H1 (cell line): ENCODE measurements at regions of chr3 and their contacts with region 1.

Region 1: DNA sequence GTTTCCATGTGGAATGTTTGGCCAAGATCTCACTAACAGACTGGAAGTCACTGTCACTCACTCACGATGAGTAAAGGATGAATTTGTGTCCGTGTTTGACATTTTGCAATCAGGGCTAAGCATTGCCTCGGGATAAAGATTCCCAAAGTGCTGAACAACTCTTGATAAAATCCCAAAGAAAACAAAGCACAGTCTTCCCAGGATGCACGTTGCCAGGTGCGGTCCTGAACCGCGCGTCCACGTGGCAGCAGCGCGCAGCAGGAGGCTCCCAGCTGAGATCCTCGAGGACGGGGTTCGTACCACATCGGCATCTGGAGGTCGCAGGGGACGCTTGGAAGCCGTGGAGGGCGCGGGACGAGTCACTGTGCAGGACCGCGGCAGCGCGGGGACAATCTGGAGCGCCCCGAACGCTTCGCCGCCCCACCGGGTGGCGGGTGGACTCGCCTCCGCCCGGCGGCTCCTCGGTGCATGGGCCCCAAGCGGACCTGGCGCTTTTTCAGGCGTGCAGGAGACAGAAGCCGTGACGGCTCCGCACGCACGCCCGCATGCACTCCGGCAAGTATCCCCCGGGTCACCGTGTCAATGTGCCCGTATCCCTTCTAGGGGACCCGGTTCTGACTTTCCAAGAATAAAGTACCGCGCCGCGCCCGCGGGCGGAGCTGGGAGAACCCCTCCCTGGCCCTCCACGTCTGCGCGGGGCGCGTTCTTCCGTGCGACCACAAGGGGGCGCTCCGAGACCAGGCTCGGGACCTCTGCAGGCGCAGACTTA is 17.7 kb downstream of the CPN2 start:
- DNase-seq: peak; percentile 50 to 98
- H3K4me3 ChIP-seq: peak overlapping the region; percentile 16 to 62 (median 32)
- H3K27ac ChIP-seq: no peak overlapping the region
- H3K4me1 ChIP-seq: peaks cover 0 to 3% (median under 1%) of the 10 kb centered on the region in 4 experiments; a peak in 1 of 7 replicates
- H3K27me3 ChIP-seq: peaks cover 0 to 24% (median 15%) of the 10 kb centered on the region in 4 experiments; a peak in 5 of 7 replicates
- CTCF ChIP-seq: peak in 2 of 3 experiments; percentile 90 to 97; a peak in 3 of 4 replicates
- EP300 ChIP-seq: peak in 1 of 2 experiments; percentile 32; a peak in 1 of 3 replicates
- POLR2A ChIP-seq: no peak
- RAD21 ChIP-seq: peak; percentile 98

Region 2: GRCh38 chr3:194344012-194344411 is 10.6 kb after region 1 on chr3:
- CTCF ChIA-PET with region 1: interaction called, 91 read pairs
- POLR2A ChIA-PET with region 1: interaction called, 3 read pairs
- DNase-seq: peak; percentile 58 to 96
- H3K4me3 ChIP-seq: no peak overlapping the region
- H3K27ac ChIP-seq: no peak overlapping the region
- H3K4me1 ChIP-seq: peaks cover 4 to 22% (median 17%) of the 10 kb centered on the region in 4 experiments
- H3K27me3 ChIP-seq: peaks cover 0 to 20% (median 11%) of the 10 kb centered on the region in 4 experiments; a peak in 6 of 7 replicates
- CTCF ChIP-seq: peak; percentile 86 to 90 (median 90)
- EP300 ChIP-seq: no peak
- POLR2A ChIP-seq: no peak
- RAD21 ChIP-seq: peak; percentile 70 to 81

Region 3: GRCh38 chr3:194351952-194352536 is 18.6 kb after region 1 on chr3:
- CTCF ChIA-PET with region 1: interaction called, 344 read pairs
- POLR2A ChIA-PET with region 1: interaction called, 3 read pairs
- DNase-seq: no peak
- H3K4me3 ChIP-seq: no peak overlapping the region
- H3K27ac ChIP-seq: no peak overlapping the region
- H3K4me1 ChIP-seq: peaks cover 0 to 3% (median 0%) of the 10 kb centered on the region in 4 experiments; a peak in 1 of 7 replicates
- H3K27me3 ChIP-seq: no peaks in the 10 kb centered on the region; a peak in 1 of 7 replicates
- CTCF ChIP-seq: no peak
- EP300 ChIP-seq: no peak
- POLR2A ChIP-seq: no peak
- RAD21 ChIP-seq: no peak

Region 4: GRCh38 chr3:194364652-194365434 is 31.4 kb after region 1 on chr3:
- CTCF ChIA-PET with region 1: interaction called, 344 read pairs
- POLR2A ChIA-PET with region 1: no interaction called
- DNase-seq: no peak
- H3K4me3 ChIP-seq: no peak overlapping the region
- H3K27ac ChIP-seq: no peak overlapping the region
- H3K4me1 ChIP-seq: peaks cover 2 to 15% (median 9%) of the 10 kb centered on the region in 4 experiments
- H3K27me3 ChIP-seq: peaks cover 0 to 8% (median 3%) of the 10 kb centered on the region in 4 experiments; a peak in 4 of 7 replicates
- CTCF ChIP-seq: no peak
- EP300 ChIP-seq: no peak
- POLR2A ChIP-seq: no peak
- RAD21 ChIP-seq: no peak

Region 5: GRCh38 chr3:194379651-194380050 is 46.3 kb after region 1 on chr3:
- CTCF ChIA-PET with region 1: interaction called, 11 read pairs
- POLR2A ChIA-PET with region 1: no interaction called
- DNase-seq: no peak
- H3K4me3 ChIP-seq: no peak overlapping the region
- H3K27ac ChIP-seq: no peak overlapping the region
- H3K4me1 ChIP-seq: peaks cover 0 to 22% (median 10%) of the 10 kb centered on the region in 4 experiments; a peak in 6 of 7 replicates
- H3K27me3 ChIP-seq: no peaks in the 10 kb centered on the region
- CTCF ChIP-seq: no peak
- EP300 ChIP-seq: no peak
- POLR2A ChIP-seq: no peak
- RAD21 ChIP-seq: no peak

Region 6: DNA sequence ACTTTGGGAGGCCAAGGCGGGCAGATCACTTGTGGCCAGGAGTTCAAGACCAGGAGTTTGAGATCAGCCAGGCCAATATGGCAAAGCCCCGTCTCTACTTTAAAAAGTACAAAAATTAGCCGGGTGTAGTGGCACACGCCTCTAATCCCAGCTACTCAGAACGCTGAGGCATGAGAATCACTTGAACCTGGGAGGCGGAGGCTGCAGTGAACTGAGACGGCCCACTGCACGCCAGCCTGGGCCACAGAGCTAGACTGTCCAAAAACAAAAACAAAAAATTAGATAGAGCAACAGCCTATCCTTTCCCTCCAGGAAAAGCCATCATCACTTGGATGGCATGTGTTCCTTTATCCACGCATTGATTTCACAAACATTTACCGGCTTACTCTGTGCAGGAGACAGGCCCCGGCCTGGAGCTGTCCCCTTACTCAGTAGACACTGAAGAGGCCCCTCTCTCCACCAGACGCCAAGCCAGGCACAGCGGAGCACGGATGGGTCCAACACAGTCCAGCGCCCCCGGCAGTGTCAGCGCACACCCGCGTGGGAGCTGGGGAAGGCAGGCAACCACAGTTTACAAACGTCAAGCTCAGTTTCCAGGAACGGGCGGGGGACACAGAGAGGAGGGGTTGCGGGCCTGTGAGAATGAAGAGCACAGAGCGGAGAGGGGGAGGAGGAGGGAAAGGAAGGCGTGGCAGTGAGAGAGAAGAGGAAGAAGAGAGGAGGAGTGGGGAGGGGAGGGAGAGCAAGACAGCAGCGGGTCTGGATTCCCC is 62.6 kb after region 1 on chr3:
- CTCF ChIA-PET with region 1: interaction called, 176 read pairs
- POLR2A ChIA-PET with region 1: interaction called, 15 read pairs
- DNase-seq: peak in 1 of 2 experiments; percentile 65
- H3K4me3 ChIP-seq: peak overlapping the region in 3 of 4 experiments; percentile 46 to 57 (median 51); a peak in 4 of 8 replicates
- H3K27ac ChIP-seq: no peak overlapping the region
- H3K4me1 ChIP-seq: peaks cover 0 to 11% (median 5%) of the 10 kb centered on the region in 4 experiments; a peak in 5 of 7 replicates
- H3K27me3 ChIP-seq: peaks cover 16 to 35% (median 25%) of the 10 kb centered on the region in 4 experiments
- CTCF ChIP-seq: no peak
- EP300 ChIP-seq: no peak
- POLR2A ChIP-seq: no peak
- RAD21 ChIP-seq: no peak

Region 7: GRCh38 chr3:194404365-194405140 is 71.2 kb after region 1 on chr3:
- CTCF ChIA-PET with region 1: interaction called, 176 read pairs
- POLR2A ChIA-PET with region 1: interaction called, 4 read pairs
- DNase-seq: no peak
- H3K4me3 ChIP-seq: no peak overlapping the region
- H3K27ac ChIP-seq: no peak overlapping the region
- H3K4me1 ChIP-seq: no peaks in the 10 kb centered on the region
- H3K27me3 ChIP-seq: no peaks in the 10 kb centered on the region
- CTCF ChIP-seq: peak in 2 of 3 experiments; percentile 41 to 52; a peak in 2 of 4 replicates
- EP300 ChIP-seq: no peak
- POLR2A ChIP-seq: no peak
- RAD21 ChIP-seq: peak; percentile 68 to 77